ENCODE measurements at regions of chr19 and their contacts with region 1.

Region 1: GRCh38 chr19:1672038-1672768 is 19.8 kb upstream of the TCF3 start:
- DNase-seq: peak; percentile 83
- H3K4me3 ChIP-seq: peak overlapping the region; percentile 65
- H3K27ac ChIP-seq: peak overlapping the region; percentile 98
- H3K4me1 ChIP-seq: peaks cover 56% of the 10 kb centered on the region
- CTCF ChIP-seq: peak; percentile 91

Region 2: GRCh38 chr19:1551068-1552040 is 120.8 kb before region 1 on chr19:
- CTCF ChIA-PET with region 1: no interaction called
- POLR2A ChIA-PET with region 1: no interaction called
- intact Hi-C with region 1: loop called (anchors 5 kb)
- DNase-seq: no peak
- H3K4me3 ChIP-seq: no peak overlapping the region
- H3K27ac ChIP-seq: no peak overlapping the region
- H3K4me1 ChIP-seq: no peaks in the 10 kb centered on the region
- CTCF ChIP-seq: no peak

Region 3: GRCh38 chr19:1592755-1593500 is 79.3 kb before region 1 on chr19 and contains the start of gene MBD3:
- CTCF ChIA-PET with region 1: no interaction called
- POLR2A ChIA-PET with region 1: interaction called, 3 read pairs
- intact Hi-C with region 1: loop called (anchors 5 kb)
- DNase-seq: peak; percentile 95
- H3K4me3 ChIP-seq: peak within 1 kb of the TSS; percentile 100
- H3K27ac ChIP-seq: peak within 1 kb of the TSS; percentile 92
- H3K4me1 ChIP-seq: peaks cover 23% of the 10 kb centered on the region
- CTCF ChIP-seq: no peak
- total RNA-seq, gene MBD3: 147 and 172 TPM in 2 replicates

Region 4: GRCh38 chr19:1605236-1606137 is 66.7 kb before region 1 on chr19 and contains the start of gene UQCR11:
- CTCF ChIA-PET with region 1: no interaction called
- POLR2A ChIA-PET with region 1: interaction called, 3 read pairs
- intact Hi-C with region 1: loop called (anchors 1 kb)
- DNase-seq: peak; percentile 97
- H3K4me3 ChIP-seq: peak within 1 kb of the TSS; percentile 100
- H3K27ac ChIP-seq: peak within 1 kb of the TSS; percentile 88
- H3K4me1 ChIP-seq: peaks cover 50% of the 10 kb centered on the region
- CTCF ChIP-seq: peak; percentile 73
- total RNA-seq, gene UQCR11: 85.3 and 86.2 TPM in 2 replicates

Region 5: DNA sequence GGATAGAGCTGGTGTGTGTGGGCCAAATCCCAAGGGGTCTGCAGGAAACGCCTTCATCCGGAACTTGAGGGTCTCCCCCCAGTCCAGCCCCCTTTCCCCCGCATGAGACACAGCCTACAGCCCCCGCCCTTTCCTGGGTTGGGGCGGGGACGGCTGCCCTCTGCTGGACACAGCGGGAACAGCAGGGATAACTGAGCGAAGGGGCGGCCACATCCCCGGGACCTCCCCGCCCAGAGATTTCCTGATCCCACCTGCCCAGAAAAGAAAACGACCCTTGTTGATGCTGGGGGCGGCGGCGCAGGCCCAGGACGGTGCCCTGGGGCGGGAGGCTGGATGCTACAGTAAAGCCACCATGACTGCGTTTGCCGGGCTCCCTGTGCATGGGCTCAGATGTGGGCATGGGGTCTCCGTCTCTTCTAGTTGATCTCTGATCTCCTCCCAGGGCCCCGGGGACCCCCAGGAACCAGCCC is 95.3 kb after region 1 on chr19:
- CTCF ChIA-PET with region 1: interaction called, 3 read pairs
- POLR2A ChIA-PET with region 1: no interaction called
- intact Hi-C with region 1: loop called (anchors 1 kb)
- DNase-seq: peak; percentile 62
- H3K4me3 ChIP-seq: no peak overlapping the region
- H3K27ac ChIP-seq: no peak overlapping the region
- H3K4me1 ChIP-seq: peaks cover 10% of the 10 kb centered on the region
- CTCF ChIP-seq: peak; percentile 91

Region 6: GRCh38 chr19:1893791-1894190 is 221.6 kb after region 1 on chr19:
- CTCF ChIA-PET with region 1: no interaction called
- POLR2A ChIA-PET with region 1: no interaction called
- intact Hi-C with region 1: no loop called
- DNase-seq: no peak
- H3K4me3 ChIP-seq: no peak overlapping the region
- H3K27ac ChIP-seq: no peak overlapping the region
- H3K4me1 ChIP-seq: peaks cover 47% of the 10 kb centered on the region
- CTCF ChIP-seq: no peak